MCF 10A (cell line): ENCODE measurements at regions of chrX and their contacts with region 1.

Region 1: GRCh38 chrX:7852166-7852565 is 9.2 kb downstream of the VCX start:
- DNase-seq: no peak
- H3K4me3 Mint-ChIP-seq: no peak overlapping the region
- H3K27ac Mint-ChIP-seq: no peak overlapping the region
- H3K4me1 Mint-ChIP-seq: no peaks in the 10 kb centered on the region
- H3K27me3 Mint-ChIP-seq: no peaks in the 10 kb centered on the region
- CTCF ChIP-seq: no peak

Region 2: DNA sequence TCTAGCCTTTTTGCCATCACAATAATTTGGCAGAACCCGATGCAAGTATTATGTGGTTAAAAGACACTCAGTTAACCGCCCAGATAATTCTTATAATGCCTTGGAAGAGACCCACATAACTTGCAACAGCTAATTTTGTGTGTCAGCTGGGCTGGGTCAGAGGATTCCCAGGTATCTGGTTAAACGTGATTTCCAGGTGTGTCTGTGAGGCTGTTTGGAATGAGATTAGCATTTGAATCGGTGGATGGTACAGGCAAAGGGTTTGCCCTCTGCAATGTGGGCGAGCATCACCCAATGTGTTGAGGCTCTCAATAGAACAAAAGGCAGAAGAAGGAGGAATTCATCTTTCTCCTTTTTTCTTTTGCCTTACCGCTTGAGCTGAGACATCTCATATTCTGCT is 390.1 kb before region 1 on chrX:
- CTCF ChIA-PET with region 1: no interaction called
- POLR2A ChIA-PET with region 1: no interaction called
- intact Hi-C with region 1: no loop called
- DNase-seq: no peak
- H3K4me3 Mint-ChIP-seq: no peak overlapping the region
- H3K27ac Mint-ChIP-seq: no peak overlapping the region
- H3K4me1 Mint-ChIP-seq: peaks cover 12% of the 10 kb centered on the region
- H3K27me3 Mint-ChIP-seq: no peaks in the 10 kb centered on the region
- CTCF ChIP-seq: no peak

Region 3: GRCh38 chrX:7841084-7841805 is 10.9 kb before region 1 on chrX:
- CTCF ChIA-PET with region 1: no interaction called
- POLR2A ChIA-PET with region 1: no interaction called
- intact Hi-C with region 1: no loop called
- DNase-seq: no peak
- H3K4me3 Mint-ChIP-seq: no peak overlapping the region
- H3K27ac Mint-ChIP-seq: no peak overlapping the region
- H3K4me1 Mint-ChIP-seq: no peaks in the 10 kb centered on the region
- H3K27me3 Mint-ChIP-seq: no peaks in the 10 kb centered on the region
- CTCF ChIP-seq: no peak

Region 4: GRCh38 chrX:7889680-7890079 is 37.5 kb after region 1 on chrX:
- CTCF ChIA-PET with region 1: no interaction called
- POLR2A ChIA-PET with region 1: no interaction called
- intact Hi-C with region 1: loop called (anchors 2 kb)
- DNase-seq: peak; percentile 31
- H3K4me3 Mint-ChIP-seq: no peak overlapping the region
- H3K27ac Mint-ChIP-seq: no peak overlapping the region
- H3K4me1 Mint-ChIP-seq: no peaks in the 10 kb centered on the region
- H3K27me3 Mint-ChIP-seq: no peaks in the 10 kb centered on the region
- CTCF ChIP-seq: no peak